H1 (cell line): ENCODE measurements at regions of chr20 and their contacts with region 1.

Region 1: DNA sequence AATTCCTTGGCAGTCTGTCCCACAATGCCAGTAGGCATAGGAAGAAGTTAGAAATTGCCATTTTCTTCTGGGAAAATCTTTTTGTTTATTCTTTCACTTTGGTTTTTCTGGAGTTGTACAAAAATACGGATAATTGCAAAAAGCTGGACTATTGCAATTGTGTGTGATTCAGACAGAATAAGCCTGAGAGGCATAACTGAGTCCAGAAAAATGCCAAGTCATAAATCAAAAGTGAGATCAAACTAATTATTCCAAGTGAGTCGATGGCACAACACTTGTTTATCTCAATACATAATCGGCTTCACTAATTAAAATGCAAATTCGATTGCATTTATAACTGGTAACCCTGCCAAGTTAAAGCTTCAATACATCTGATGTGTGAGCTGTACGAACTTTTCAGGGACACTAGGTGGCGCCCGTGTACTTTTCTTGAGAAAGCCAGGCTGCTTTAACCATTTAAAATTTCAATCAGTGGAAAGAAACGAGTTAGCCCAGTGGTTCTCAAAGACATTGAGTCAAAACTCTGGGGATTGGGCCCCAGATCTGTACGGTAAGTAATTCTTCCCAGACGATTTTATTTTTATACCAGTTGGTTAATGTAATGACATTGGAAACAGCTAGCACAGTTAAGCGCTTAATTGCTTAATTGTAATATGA is 102.6 kb downstream of the LAMP5 start:
- DNase-seq: peak in 1 of 2 experiments; percentile 67
- H3K4me3 ChIP-seq: no peak overlapping the region
- H3K27ac ChIP-seq: no peak overlapping the region
- H3K4me1 ChIP-seq: no peaks in the 10 kb centered on the region
- H3K27me3 ChIP-seq: no peaks in the 10 kb centered on the region
- CTCF ChIP-seq: peak in 2 of 3 experiments; percentile 79 to 85; a peak in 3 of 4 replicates
- EP300 ChIP-seq: no peak
- POLR2A ChIP-seq: no peak
- RAD21 ChIP-seq: peak; percentile 93 to 97

Region 2: DNA sequence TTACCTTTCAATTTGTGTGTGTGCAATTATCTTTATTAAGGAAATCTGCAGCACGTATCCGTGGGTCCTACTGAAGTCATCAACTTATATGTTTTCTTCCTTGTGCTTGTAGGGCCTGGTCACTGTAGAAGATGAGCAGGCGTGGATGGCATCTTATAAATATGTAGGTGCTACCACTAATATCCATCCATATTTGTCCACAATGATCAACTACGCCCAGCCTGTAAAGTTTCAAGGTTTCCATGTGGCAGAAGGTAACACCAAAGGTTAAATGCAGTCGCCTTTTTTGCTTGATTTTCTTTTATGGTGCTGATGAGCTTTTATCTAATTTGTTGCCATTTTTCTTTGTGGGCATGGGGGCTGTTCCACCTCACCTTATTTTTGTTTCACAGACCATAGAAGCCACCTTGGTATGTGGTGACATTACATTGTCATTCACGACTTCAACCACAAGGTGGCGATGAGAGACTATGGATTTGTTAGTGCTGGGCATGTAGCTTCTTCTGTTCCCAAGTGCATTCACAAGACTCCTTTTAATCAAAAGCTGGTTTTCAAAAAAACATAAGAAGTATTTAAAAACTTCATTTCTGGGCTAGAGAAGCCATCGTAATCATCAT is 209.0 kb before region 1 on chr20:
- CTCF ChIA-PET with region 1: interaction called, 132 read pairs
- POLR2A ChIA-PET with region 1: no interaction called
- DNase-seq: peak; percentile 7 to 81
- H3K4me3 ChIP-seq: no peak overlapping the region
- H3K27ac ChIP-seq: no peak overlapping the region
- H3K4me1 ChIP-seq: no peaks in the 10 kb centered on the region
- H3K27me3 ChIP-seq: no peaks in the 10 kb centered on the region
- CTCF ChIP-seq: peak in 2 of 3 experiments; percentile 78 to 85; a peak in 3 of 4 replicates
- EP300 ChIP-seq: no peak
- POLR2A ChIP-seq: no peak
- RAD21 ChIP-seq: peak; percentile 94

Region 3: GRCh38 chr20:9482180-9482579 is 134.8 kb before region 1 on chr20:
- CTCF ChIA-PET with region 1: no interaction called
- POLR2A ChIA-PET with region 1: no interaction called
- DNase-seq: no peak
- H3K4me3 ChIP-seq: no peak overlapping the region
- H3K27ac ChIP-seq: no peak overlapping the region
- H3K4me1 ChIP-seq: no peaks in the 10 kb centered on the region
- H3K27me3 ChIP-seq: no peaks in the 10 kb centered on the region
- CTCF ChIP-seq: no peak
- EP300 ChIP-seq: no peak
- POLR2A ChIP-seq: no peak
- RAD21 ChIP-seq: no peak

Region 4: GRCh38 chr20:9602847-9603183 is 14.1 kb before region 1 on chr20:
- CTCF ChIA-PET with region 1: interaction called, 19 read pairs
- POLR2A ChIA-PET with region 1: no interaction called
- DNase-seq: no peak
- H3K4me3 ChIP-seq: no peak overlapping the region
- H3K27ac ChIP-seq: no peak overlapping the region
- H3K4me1 ChIP-seq: peaks cover 0 to 4% (median 0%) of the 10 kb centered on the region in 4 experiments; a peak in 1 of 7 replicates
- H3K27me3 ChIP-seq: no peaks in the 10 kb centered on the region; a peak in 1 of 7 replicates
- CTCF ChIP-seq: no peak
- EP300 ChIP-seq: no peak
- POLR2A ChIP-seq: no peak
- RAD21 ChIP-seq: no peak

Region 5: DNA sequence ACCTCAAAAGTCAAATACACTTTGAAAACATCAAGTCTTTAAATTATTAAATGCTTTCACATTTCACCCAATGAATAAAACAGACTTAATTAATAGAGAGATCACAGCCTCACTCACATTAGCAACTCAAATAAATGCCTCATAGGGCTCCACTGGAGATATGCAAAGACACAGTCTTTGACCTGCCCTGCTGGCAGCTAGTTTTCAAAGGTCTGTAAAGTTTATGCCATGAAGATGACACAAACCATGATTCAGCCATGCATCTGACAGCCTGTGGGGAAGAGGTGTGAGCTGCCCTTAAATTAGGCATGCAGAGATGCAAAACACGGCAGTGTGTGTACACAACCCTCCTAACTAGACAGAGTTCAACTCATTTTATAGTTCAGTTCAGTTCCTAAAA is 138.3 kb after region 1 on chr20:
- CTCF ChIA-PET with region 1: no interaction called
- POLR2A ChIA-PET with region 1: no interaction called
- DNase-seq: no peak
- H3K4me3 ChIP-seq: no peak overlapping the region
- H3K27ac ChIP-seq: peak overlapping the region; percentile 18; the same call in 1 of the 2 replicates
- H3K4me1 ChIP-seq: peaks cover 0 to 5% (median 2%) of the 10 kb centered on the region in 4 experiments; a peak in 4 of 7 replicates
- H3K27me3 ChIP-seq: no peaks in the 10 kb centered on the region
- CTCF ChIP-seq: no peak
- EP300 ChIP-seq: no peak
- POLR2A ChIP-seq: no peak
- RAD21 ChIP-seq: no peak

Region 6: GRCh38 chr20:9884061-9884460 is 267.1 kb after region 1 on chr20:
- CTCF ChIA-PET with region 1: interaction called, 104 read pairs
- POLR2A ChIA-PET with region 1: no interaction called
- DNase-seq: no peak
- H3K4me3 ChIP-seq: no peak overlapping the region
- H3K27ac ChIP-seq: no peak overlapping the region
- H3K4me1 ChIP-seq: peaks cover 0 to 2% (median 0%) of the 10 kb centered on the region in 4 experiments; a peak in 1 of 7 replicates
- H3K27me3 ChIP-seq: no peaks in the 10 kb centered on the region
- CTCF ChIP-seq: peak in 2 of 3 experiments; percentile 25 to 43; a peak in 2 of 4 replicates
- EP300 ChIP-seq: no peak
- POLR2A ChIP-seq: no peak
- RAD21 ChIP-seq: peak; percentile 65 to 75

Region 7: GRCh38 chr20:9919271-9920014 is 302.5 kb after region 1 on chr20:
- CTCF ChIA-PET with region 1: interaction called, 76 read pairs
- POLR2A ChIA-PET with region 1: no interaction called
- DNase-seq: no peak
- H3K4me3 ChIP-seq: no peak overlapping the region
- H3K27ac ChIP-seq: no peak overlapping the region
- H3K4me1 ChIP-seq: no peaks in the 10 kb centered on the region
- H3K27me3 ChIP-seq: no peaks in the 10 kb centered on the region
- CTCF ChIP-seq: no peak
- EP300 ChIP-seq: no peak
- POLR2A ChIP-seq: no peak
- RAD21 ChIP-seq: no peak

Region 8: GRCh38 chr20:10074513-10074912 is 457.6 kb after region 1 on chr20:
- CTCF ChIA-PET with region 1: interaction called, 16 read pairs
- POLR2A ChIA-PET with region 1: no interaction called
- DNase-seq: no peak
- H3K4me3 ChIP-seq: no peak overlapping the region
- H3K27ac ChIP-seq: no peak overlapping the region
- H3K4me1 ChIP-seq: no peaks in the 10 kb centered on the region
- H3K27me3 ChIP-seq: peaks cover 0 to under 1% (median 0%) of the 10 kb centered on the region in 4 experiments; a peak in 1 of 7 replicates
- CTCF ChIP-seq: no peak
- EP300 ChIP-seq: no peak
- POLR2A ChIP-seq: no peak
- RAD21 ChIP-seq: no peak